BJ (cell line): ENCODE measurements at regions of chr12 and their contacts with region 1.

Region 1: GRCh38 chr12:1634590-1635191 is 5.7 kb downstream of the WNT5B start:
- DNase-seq: no peak
- H3K4me3 ChIP-seq: no peak overlapping the region
- H3K27me3 ChIP-seq: no peaks in the 10 kb centered on the region
- CTCF ChIP-seq: peak; percentile 95

Region 2: DNA sequence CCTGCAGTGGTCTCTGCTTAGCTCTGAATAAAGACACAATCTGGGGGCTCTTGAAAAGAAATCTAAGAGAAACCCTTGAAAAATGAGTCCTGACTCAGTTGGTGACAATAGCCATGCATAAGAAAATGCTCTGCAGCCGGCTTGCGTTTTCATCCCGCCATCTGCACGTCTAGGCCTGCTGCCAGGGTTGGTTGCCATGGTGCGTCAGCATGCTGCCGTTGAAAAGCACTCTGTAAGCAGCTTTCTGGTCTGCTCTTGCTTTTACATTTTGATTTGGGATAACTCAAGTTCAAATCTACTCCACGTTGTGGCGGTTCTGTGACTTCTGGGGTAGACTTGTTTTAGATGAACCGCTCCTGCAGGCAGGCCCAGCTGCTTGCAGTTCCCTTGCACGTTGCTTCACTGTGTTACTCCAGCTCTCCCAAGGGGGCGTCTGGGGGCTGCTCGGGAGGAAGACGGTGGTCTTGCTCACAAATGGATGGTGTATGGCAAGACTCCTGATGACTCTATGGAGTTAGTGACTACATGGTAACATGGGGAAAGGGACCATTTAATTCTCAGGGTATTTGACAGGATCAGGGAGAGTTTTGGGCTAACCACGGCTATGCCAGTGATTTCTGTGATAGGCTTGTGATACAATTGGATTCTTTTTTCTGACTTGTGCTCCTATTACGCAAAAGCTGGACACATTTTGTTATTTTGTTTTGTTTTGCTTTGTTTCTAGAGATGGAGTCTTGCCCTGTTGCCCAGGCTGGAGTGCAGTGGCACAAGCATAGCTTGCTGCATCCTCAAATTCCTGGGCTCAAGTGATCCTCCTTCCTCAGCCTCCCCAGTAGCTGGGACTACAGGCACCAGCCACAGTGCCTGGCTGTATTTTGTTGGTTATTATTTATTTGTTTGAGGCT is 10.1 kb after region 1 on chr12:
- CTCF ChIA-PET with region 1: interaction called, 28 read pairs
- POLR2A ChIA-PET with region 1: no interaction called
- DNase-seq: peak; percentile 56
- H3K4me3 ChIP-seq: no peak overlapping the region
- H3K27me3 ChIP-seq: no peaks in the 10 kb centered on the region
- CTCF ChIP-seq: no peak

Region 3: DNA sequence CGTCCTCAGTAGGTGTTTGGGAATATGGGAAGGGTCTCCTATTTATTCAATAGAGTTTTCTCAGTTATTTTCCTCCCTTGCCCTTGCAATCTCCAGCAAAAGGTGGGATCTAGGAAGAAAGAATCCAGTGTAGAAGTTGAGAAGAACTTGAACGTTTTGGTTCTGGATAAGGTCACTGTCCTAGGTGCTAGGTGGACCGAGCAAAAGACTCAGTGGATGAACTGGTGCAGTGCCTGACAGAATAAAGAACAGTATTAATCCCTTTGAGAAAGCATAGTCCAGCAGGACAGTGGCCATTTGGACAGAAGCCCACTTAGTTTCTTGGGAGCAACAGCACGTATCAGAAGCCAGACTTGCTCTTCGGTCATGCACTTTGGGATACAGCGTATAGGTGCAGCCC is 153.0 kb after region 1 on chr12:
- CTCF ChIA-PET with region 1: interaction called, 63 read pairs
- POLR2A ChIA-PET with region 1: no interaction called
- DNase-seq: no peak
- H3K4me3 ChIP-seq: no peak overlapping the region
- H3K27me3 ChIP-seq: no peaks in the 10 kb centered on the region
- CTCF ChIP-seq: no peak